Panc1 (cell line): ENCODE measurements at regions of chr2 and their contacts with region 1.

Region 1: GRCh38 chr2:120680136-120680761 is 55.4 kb upstream of the GLI2 start:
- DNase-seq: no peak
- ATAC-seq: peak; percentile 88
- H3K4me3 ChIP-seq: peak overlapping the region in 1 of 2 experiments; percentile 15; a peak in 1 of 4 replicates
- H3K27ac ChIP-seq: no peak overlapping the region
- H3K4me1 ChIP-seq: 0 out of 2 replicates have a peak, but pooled peaks cover 2% of the 10 kb centered on the region
- H3K27me3 ChIP-seq: peaks cover 5% of the 10 kb centered on the region
- CTCF ChIP-seq: peak; percentile 82

Region 2: DNA sequence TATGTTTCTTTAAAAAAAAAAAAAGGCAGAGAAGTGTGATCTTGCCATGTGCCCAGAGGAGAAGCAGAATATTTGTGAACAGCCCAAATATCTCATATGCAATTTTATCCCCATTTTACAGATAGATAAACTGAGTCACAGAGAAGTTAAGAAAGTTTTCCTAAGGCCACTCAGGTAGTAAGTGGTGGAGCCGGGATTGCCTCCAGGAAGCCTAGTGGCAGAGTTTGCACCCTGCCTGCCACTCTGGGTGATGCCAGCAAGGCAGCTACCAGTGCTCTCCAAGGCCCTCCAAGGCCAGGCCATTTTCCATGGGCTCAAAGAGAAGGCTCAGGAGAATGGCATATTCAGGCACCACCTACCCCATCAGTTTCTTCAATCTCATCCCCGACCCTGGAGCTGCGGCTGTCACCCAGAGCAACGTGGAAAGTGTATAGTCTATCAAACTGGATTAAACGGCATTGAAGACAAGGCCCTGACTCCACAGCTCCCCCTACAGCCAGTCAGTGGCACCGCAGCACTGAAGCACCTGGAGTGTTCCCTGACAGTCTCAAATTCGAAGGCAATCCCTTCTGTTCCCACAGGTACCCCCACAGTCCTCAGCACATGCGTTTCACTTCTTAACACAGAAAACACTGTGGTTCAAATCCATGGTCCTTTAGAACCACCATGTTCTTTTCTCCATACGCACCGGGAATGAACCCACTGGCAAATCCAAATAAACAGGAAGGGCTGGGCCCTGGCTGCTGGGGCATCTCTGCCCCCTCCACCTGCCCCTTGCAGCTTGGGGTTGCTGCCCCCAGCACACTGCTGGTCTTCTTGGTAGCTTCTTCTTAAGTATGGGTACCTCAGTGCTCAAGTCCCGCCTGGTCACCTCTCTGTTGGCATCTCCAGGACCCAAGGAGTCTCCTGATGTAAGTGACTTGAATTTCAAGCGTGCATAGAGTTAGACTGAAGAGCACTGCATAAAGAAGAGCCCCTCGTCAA is 159.0 kb before region 1 on chr2:
- CTCF ChIA-PET with region 1: no interaction called
- POLR2A ChIA-PET with region 1: no interaction called
- in situ Hi-C with region 1: no loop called
- intact Hi-C with region 1: loop called (anchors 5 kb)
- DNase-seq: peak; percentile 15
- ATAC-seq: peak; percentile 82
- H3K4me3 ChIP-seq: no peak overlapping the region
- H3K27ac ChIP-seq: no peak overlapping the region
- H3K4me1 ChIP-seq: no peaks in the 10 kb centered on the region; the same call in 1 of the 2 replicates
- H3K27me3 ChIP-seq: peaks cover 3% of the 10 kb centered on the region
- CTCF ChIP-seq: peak; percentile 96

Region 3: GRCh38 chr2:120845277-120845676 is 165.0 kb after region 1 on chr2:
- CTCF ChIA-PET with region 1: no interaction called
- POLR2A ChIA-PET with region 1: no interaction called
- in situ Hi-C with region 1: no loop called
- intact Hi-C with region 1: no loop called
- DNase-seq: no peak
- ATAC-seq: no peak
- H3K4me3 ChIP-seq: no peak overlapping the region
- H3K27ac ChIP-seq: no peak overlapping the region
- H3K4me1 ChIP-seq: no peaks in the 10 kb centered on the region
- H3K27me3 ChIP-seq: no peaks in the 10 kb centered on the region
- CTCF ChIP-seq: no peak